ENCODE measurements at regions of chr11 and their contacts with region 1.

Region 1: GRCh38 chr11:112795142-112795815 is 165.9 kb upstream of the NCAM1 start:
- DNase-seq: peak; percentile 29 to 72
- H3K4me3 ChIP-seq: no peak overlapping the region
- H3K27ac ChIP-seq: no peak overlapping the region
- H3K4me1 ChIP-seq: peaks cover 4 to 14% (median 10%) of the 10 kb centered on the region in 4 experiments
- H3K27me3 ChIP-seq: no peaks in the 10 kb centered on the region
- CTCF ChIP-seq: peak; percentile 54 to 74 (median 67)
- EP300 ChIP-seq: no peak
- POLR2A ChIP-seq: no peak
- RAD21 ChIP-seq: peak; percentile 61 to 65

Region 2: DNA sequence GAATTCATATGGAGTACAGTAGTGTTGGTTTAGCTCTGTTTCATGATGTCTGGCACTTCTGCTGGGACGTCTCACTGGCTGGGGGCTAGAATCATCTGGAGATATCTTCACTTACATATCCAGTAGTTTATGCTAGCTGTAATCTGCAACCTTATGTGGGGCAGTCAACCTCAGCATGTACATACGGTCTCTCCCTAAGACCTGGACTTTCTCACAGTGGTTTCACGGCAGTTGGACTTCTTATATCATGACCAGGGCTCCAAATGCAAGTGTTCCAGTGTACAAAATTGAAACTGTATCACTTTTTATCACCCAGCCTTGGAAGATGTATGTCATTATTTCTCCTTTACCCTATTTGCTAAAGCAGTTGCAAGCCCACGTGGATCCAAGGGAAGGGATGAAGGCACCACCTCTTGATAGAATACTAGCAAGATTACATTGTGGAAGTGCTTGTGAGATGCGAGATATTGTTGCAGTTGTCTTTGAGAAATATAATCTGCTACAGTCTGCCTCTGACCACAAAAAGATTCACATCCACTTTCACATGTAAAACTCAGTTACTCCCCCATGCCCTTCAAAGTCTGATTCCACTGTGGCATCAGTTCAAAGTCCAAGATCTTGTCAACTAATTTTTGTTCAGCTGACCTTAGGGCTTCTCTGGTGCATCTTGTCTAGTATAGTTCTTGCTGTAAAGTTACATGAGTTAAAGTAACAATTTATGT is 150.7 kb before region 1 on chr11:
- CTCF ChIA-PET with region 1: no interaction called
- POLR2A ChIA-PET with region 1: no interaction called
- DNase-seq: no peak
- H3K4me3 ChIP-seq: no peak overlapping the region
- H3K27ac ChIP-seq: no peak overlapping the region
- H3K4me1 ChIP-seq: no peaks in the 10 kb centered on the region
- H3K27me3 ChIP-seq: no peaks in the 10 kb centered on the region
- CTCF ChIP-seq: no peak
- EP300 ChIP-seq: no peak
- POLR2A ChIP-seq: no peak
- RAD21 ChIP-seq: no peak

Region 3: GRCh38 chr11:112728716-112729115 is 66.6 kb before region 1 on chr11:
- CTCF ChIA-PET with region 1: no interaction called
- POLR2A ChIA-PET with region 1: no interaction called
- DNase-seq: no peak
- H3K4me3 ChIP-seq: no peak overlapping the region
- H3K27ac ChIP-seq: no peak overlapping the region
- H3K4me1 ChIP-seq: peaks cover 0 to 3% (median 0%) of the 10 kb centered on the region in 4 experiments; a peak in 1 of 7 replicates
- H3K27me3 ChIP-seq: no peaks in the 10 kb centered on the region
- CTCF ChIP-seq: no peak
- EP300 ChIP-seq: no peak
- POLR2A ChIP-seq: no peak
- RAD21 ChIP-seq: no peak

Region 4: GRCh38 chr11:112784323-112785073 is 10.8 kb before region 1 on chr11:
- CTCF ChIA-PET with region 1: interaction called, 48 read pairs
- POLR2A ChIA-PET with region 1: no interaction called
- DNase-seq: no peak
- H3K4me3 ChIP-seq: no peak overlapping the region
- H3K27ac ChIP-seq: no peak overlapping the region
- H3K4me1 ChIP-seq: peaks cover 0 to 7% (median 2%) of the 10 kb centered on the region in 4 experiments; a peak in 3 of 7 replicates
- H3K27me3 ChIP-seq: no peaks in the 10 kb centered on the region
- CTCF ChIP-seq: peak; percentile 20 to 52 (median 23); a peak in 3 of 4 replicates
- EP300 ChIP-seq: no peak
- POLR2A ChIP-seq: no peak
- RAD21 ChIP-seq: peak; percentile 26 to 44; a peak in 3 of 4 replicates

Region 5: DNA sequence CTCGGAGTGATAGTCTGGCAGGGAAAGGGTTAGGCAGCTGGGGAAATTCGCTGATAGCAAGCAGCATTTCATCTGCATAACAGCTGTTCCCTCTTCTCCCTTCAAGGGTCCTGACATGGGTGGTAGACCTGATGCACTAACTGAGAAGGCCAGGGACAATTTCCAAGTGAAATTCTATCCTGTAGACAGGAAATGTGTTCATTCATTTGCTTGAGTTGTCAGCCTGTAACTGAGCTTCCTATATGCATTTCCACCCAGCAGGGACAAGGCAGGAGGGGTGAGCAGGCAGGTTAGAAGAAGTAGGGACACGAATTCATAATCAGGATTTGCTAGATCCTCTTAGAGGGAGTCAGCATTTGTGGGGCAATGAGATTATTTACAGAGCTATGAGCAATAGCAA is 11.6 kb after region 1 on chr11:
- CTCF ChIA-PET with region 1: interaction called, 14 read pairs
- POLR2A ChIA-PET with region 1: no interaction called
- DNase-seq: no peak
- H3K4me3 ChIP-seq: no peak overlapping the region
- H3K27ac ChIP-seq: no peak overlapping the region
- H3K4me1 ChIP-seq: peaks cover 0 to 8% (median 8%) of the 10 kb centered on the region in 4 experiments; a peak in 5 of 7 replicates
- H3K27me3 ChIP-seq: no peaks in the 10 kb centered on the region; a peak in 1 of 7 replicates
- CTCF ChIP-seq: no peak
- EP300 ChIP-seq: no peak
- POLR2A ChIP-seq: no peak
- RAD21 ChIP-seq: no peak

Region 6: DNA sequence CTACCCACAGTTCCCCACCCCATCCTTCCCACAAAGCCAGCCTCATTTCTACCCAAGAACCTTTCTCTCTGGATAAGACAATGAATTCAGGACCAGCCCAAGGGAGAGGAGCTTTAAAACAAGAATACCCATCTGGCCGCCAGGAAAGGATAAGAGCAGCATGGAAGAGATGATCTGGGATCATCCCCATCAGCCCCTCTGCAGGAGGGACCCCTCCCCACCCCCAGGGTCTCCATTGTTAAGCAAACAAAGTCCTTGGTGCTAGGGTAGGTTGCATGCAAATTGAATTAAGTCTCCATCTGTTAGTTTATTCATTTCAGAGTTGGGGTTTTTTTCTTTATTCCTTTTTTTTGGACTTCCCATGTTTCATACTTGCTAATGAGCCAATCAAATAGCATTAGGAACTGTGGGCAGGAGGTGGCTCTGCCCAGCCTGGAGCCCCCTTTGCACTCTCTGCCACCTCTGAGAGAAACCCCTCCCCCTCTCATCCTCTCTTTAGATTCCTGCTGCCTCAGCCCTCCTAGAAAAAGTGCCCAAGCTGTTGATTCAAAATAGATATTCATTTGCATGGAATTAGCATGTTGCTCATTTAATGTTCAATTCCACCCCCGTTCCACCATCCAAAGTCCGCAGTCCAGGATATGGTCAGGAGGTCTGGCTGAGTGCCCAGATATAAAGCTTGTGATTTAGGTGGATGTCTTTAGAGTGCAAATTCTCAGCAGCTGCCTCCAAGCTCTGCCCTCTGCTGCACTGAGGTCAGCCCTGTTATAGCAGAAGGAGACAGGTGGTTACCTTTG is 27.4 kb after region 1 on chr11:
- CTCF ChIA-PET with region 1: interaction called, 10 read pairs
- POLR2A ChIA-PET with region 1: no interaction called
- DNase-seq: peak; percentile 58 to 66
- H3K4me3 ChIP-seq: peak overlapping the region in 3 of 4 experiments; percentile 3 to 43 (median 8); a peak in 3 of 8 replicates
- H3K27ac ChIP-seq: no peak overlapping the region
- H3K4me1 ChIP-seq: peaks cover 10 to 36% (median 23%) of the 10 kb centered on the region in 4 experiments
- H3K27me3 ChIP-seq: no peaks in the 10 kb centered on the region; a peak in 2 of 7 replicates
- CTCF ChIP-seq: no peak
- EP300 ChIP-seq: peak in 1 of 2 experiments; percentile 32; a peak in 1 of 3 replicates
- POLR2A ChIP-seq: no peak
- RAD21 ChIP-seq: no peak; a peak in 1 of 4 replicates

Region 7: DNA sequence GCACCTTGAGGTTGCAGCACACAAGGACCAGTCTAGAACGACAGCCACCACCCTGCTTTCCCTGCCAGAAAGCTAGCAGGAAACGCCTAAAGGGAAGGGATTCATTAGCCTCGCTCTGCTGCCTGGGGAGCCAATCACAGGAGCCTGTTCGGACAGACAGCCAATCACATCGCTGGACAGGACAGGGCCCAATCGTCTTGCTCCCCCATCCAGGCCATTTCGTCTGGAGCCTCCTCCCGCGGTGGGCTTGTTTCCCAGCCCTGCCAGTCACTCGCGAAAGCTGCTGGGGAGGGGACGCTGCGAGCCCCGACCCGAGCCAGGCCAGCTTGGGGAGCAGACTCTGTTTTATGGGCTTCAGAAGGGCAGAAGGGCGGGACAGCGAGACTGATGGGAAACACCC is 86.2 kb after region 1 on chr11:
- CTCF ChIA-PET with region 1: no interaction called
- POLR2A ChIA-PET with region 1: no interaction called
- DNase-seq: peak; percentile 7 to 83
- H3K4me3 ChIP-seq: peak overlapping the region; percentile 31 to 57 (median 38); a peak in 6 of 8 replicates
- H3K27ac ChIP-seq: no peak overlapping the region
- H3K4me1 ChIP-seq: peaks cover 0 to 11% (median 3%) of the 10 kb centered on the region in 4 experiments; a peak in 6 of 7 replicates
- H3K27me3 ChIP-seq: peaks cover 0 to 5% (median 2%) of the 10 kb centered on the region in 4 experiments; a peak in 4 of 7 replicates
- CTCF ChIP-seq: no peak
- EP300 ChIP-seq: no peak
- POLR2A ChIP-seq: peak in 1 of 2 experiments; percentile 21; a peak in 1 of 3 replicates
- RAD21 ChIP-seq: no peak

Region 8: DNA sequence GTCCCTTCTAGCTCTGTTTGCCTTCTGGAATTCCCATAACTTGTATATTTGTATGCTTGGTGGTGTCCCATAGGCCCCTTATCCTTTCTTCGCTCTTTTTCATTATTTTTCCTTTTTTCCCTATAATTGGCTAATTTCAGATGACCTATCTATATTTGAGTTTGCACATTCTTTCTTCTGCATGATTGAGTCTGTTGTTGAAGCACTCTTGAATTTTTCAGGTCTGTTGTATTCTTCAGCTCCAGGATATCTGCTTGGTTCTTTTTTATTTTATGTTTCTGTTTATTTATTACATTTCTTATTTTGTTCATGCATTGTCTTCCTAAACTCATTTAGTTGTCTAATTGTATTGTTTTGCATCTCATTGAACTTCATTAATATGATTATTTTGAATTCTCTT is 193.9 kb after region 1 on chr11:
- CTCF ChIA-PET with region 1: no interaction called
- POLR2A ChIA-PET with region 1: no interaction called
- DNase-seq: no peak
- H3K4me3 ChIP-seq: no peak overlapping the region
- H3K27ac ChIP-seq: no peak overlapping the region
- H3K4me1 ChIP-seq: no peaks in the 10 kb centered on the region
- H3K27me3 ChIP-seq: no peaks in the 10 kb centered on the region
- CTCF ChIP-seq: no peak
- EP300 ChIP-seq: no peak
- POLR2A ChIP-seq: no peak
- RAD21 ChIP-seq: no peak

Region 9: DNA sequence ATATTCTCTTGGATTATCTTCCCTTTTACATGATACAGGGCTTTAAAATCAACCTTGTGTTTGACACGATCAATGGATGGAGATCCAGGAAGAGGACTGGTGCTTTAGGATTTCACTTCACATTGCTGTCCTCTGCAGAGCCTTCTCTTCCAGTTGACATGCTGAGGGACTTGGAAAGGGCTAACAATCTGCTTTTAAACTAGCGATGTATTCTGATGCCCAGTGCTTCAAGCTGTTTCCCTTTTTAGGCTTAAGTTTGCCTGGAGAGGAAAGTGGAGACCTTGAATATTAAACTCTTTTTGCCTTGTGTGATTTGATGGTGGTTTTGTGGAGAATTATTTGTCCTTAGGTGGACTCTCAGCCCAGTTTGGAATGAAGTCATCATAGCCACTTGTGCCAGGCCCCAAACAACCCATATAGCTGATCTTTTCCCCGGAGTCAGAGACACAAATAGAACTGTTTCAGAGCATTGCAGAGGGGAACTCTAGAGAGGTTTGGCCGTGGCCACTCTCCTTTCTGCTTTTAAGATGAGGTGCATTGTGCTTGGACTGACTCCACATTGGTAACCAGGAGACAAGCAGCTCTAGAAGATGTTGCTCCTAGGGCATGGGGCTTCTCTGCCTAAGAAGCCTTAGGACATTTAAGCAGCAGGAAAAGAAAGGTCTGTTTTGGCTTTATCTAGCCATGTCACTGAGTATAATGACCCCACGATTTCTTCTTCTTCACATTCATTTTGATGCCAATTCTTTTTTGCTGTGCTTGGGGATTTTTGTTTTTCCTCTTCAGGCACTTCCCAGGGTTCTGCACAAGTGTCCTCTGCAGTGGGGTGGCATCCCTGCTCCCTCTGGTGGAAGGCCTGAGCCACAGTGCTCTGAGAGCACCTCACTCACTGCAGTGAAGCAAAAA is 318.8 kb after region 1 on chr11:
- CTCF ChIA-PET with region 1: interaction called, 14 read pairs
- POLR2A ChIA-PET with region 1: no interaction called
- DNase-seq: peak; percentile 13 to 52
- H3K4me3 ChIP-seq: no peak overlapping the region
- H3K27ac ChIP-seq: no peak overlapping the region
- H3K4me1 ChIP-seq: no peaks in the 10 kb centered on the region
- H3K27me3 ChIP-seq: no peaks in the 10 kb centered on the region
- CTCF ChIP-seq: peak; percentile 73 to 82 (median 82)
- EP300 ChIP-seq: no peak
- POLR2A ChIP-seq: no peak
- RAD21 ChIP-seq: peak; percentile 88

Region 10: DNA sequence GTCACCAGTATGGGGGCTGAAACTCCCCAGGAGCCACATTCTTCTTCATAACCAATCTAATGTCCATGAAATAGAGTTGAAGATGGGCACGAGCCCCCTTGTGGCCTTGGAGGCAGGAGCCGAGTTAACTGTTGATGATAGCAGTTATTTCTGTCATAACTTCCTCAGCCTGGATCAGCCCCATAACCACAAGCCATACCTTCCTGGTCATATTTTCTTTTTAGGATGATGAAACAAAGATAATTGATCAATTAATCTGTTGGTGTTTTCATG is 454.1 kb after region 1 on chr11:
- CTCF ChIA-PET with region 1: interaction called, 11 read pairs
- POLR2A ChIA-PET with region 1: no interaction called
- DNase-seq: no peak
- H3K4me3 ChIP-seq: no peak overlapping the region
- H3K27ac ChIP-seq: no peak overlapping the region
- H3K4me1 ChIP-seq: peaks cover 0 to 9% (median under 1%) of the 10 kb centered on the region in 4 experiments; a peak in 4 of 7 replicates
- H3K27me3 ChIP-seq: no peaks in the 10 kb centered on the region
- CTCF ChIP-seq: peak; percentile 26 to 51 (median 33); a peak in 3 of 4 replicates
- EP300 ChIP-seq: no peak
- POLR2A ChIP-seq: no peak
- RAD21 ChIP-seq: peak; percentile 36 to 37